PC-3 (cell line): ENCODE measurements at regions of chr9 and their contacts with region 1.

Region 1: DNA sequence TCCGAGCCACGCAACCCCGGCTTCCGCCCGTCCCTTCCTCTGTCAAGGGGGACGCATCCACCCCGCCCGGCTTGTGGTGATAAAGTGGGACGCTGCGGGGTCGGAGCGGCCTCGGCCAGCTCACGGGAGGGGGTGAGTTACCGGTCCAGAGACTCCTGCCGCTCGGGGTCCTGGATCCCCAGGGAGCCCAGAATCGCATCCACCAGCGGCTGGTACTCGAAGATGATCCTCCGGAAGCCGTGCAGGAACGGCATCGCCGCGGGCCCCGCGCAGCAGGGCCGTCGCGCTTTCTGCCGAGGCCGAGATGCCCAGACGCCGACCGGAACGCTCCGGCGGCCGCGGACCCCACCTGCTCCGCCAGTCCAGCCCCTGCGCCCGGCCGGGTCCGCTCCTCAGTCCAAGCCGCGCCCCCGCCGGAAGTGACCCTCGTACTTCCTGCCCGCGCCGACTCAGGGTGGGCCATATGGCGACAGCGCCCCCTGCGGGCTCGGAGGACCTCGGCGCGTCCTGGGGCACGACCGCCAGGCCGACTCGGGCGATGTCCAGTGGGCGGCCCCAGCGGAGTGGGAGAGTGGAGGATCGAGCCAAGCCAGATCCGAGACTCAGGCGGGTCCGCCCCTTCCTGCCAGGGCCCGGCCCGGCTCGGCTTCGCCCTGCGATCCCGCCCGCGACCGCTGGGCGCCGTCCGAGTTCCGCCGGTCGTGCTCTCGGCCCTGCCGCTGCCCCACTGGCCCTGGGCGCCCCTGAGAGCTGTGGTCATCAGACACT is at the start of gene ASB6:
- DNase-seq: peak; percentile 91
- ATAC-seq: peak; percentile 97
- H3K4me3 ChIP-seq: peak within 1 kb of the TSS; percentile 97
- H3K27ac ChIP-seq: no peak within 1 kb of the TSS
- H3K4me1 ChIP-seq: peaks cover 3% of the 10 kb centered on the region; the same call in 1 of the 2 replicates
- H3K27me3 ChIP-seq: no peaks in the 10 kb centered on the region
- CTCF ChIP-seq: peak; percentile 91
- total RNA-seq, gene ASB6: 19.1 and 20.8 TPM in 2 replicates

Region 2: GRCh38 chr9:129569502-129570449 is 72.2 kb before region 1 on chr9:
- CTCF ChIA-PET with region 1: no interaction called
- POLR2A ChIA-PET with region 1: no interaction called
- intact Hi-C with region 1: no loop called
- DNase-seq: peak; percentile 13
- ATAC-seq: no peak
- H3K4me3 ChIP-seq: no peak overlapping the region
- H3K27ac ChIP-seq: peak overlapping the region; percentile 74
- H3K4me1 ChIP-seq: peaks cover 22% of the 10 kb centered on the region
- H3K27me3 ChIP-seq: no peaks in the 10 kb centered on the region
- CTCF ChIP-seq: peak; percentile 40

Region 3: GRCh38 chr9:129687396-129687795 is 45.5 kb after region 1 on chr9:
- CTCF ChIA-PET with region 1: no interaction called
- POLR2A ChIA-PET with region 1: no interaction called
- intact Hi-C with region 1: loop called (anchors 1 kb)
- DNase-seq: peak; percentile 78
- ATAC-seq: peak; percentile 88
- H3K4me3 ChIP-seq: no peak overlapping the region
- H3K27ac ChIP-seq: no peak overlapping the region
- H3K4me1 ChIP-seq: peaks cover 27% of the 10 kb centered on the region
- H3K27me3 ChIP-seq: no peaks in the 10 kb centered on the region
- CTCF ChIP-seq: no peak

Region 4: DNA sequence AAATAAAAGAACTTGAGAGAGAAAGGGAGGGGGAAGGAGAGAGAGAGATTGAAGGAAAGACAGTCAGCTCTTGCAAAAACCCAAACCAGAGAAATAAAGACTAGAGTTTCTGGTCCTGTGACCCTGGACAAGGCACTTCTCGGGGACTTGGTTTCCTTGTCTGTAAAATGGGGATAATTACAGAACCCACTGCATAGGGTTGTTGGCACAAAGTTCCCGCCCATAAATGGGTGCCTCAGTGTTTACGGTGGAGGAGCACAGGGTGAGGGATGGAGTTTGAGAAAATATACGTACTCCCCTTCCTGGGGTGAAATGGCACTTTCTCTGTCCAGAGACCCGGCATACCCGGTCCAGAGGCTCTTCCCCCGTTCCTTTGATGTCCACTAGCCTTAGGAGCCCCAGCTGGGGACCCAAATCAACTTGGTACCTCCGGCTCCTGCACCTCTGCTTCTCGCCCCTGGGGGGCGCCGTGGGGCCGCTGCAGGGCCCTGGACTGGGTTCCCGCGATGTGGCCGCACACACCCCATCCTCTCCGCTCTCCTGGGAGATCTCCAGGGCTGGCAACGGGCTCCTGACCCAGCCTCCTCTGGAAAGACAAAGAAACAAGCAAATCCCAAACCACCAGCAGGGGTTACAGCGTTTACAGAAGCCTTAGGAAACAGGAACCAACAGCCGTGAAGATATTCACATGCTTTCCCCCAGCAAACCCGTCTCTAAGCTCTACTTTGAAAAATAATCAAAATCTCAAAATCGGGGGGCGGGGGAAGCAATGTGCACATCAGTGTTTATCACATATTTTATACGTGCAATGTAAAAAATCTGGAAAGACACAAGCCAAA is 84.6 kb after region 1 on chr9:
- CTCF ChIA-PET with region 1: no interaction called
- POLR2A ChIA-PET with region 1: no interaction called
- intact Hi-C with region 1: loop called (anchors 2 kb)
- DNase-seq: peak; percentile 77
- ATAC-seq: peak; percentile 98
- H3K4me3 ChIP-seq: peak overlapping the region; percentile 16; the same call in 1 of the 2 replicates
- H3K27ac ChIP-seq: no peak overlapping the region
- H3K4me1 ChIP-seq: no peaks in the 10 kb centered on the region
- H3K27me3 ChIP-seq: no peaks in the 10 kb centered on the region
- CTCF ChIP-seq: peak; percentile 87

Region 5: GRCh38 chr9:129761901-129762364 is 120.0 kb after region 1 on chr9:
- CTCF ChIA-PET with region 1: no interaction called
- POLR2A ChIA-PET with region 1: no interaction called
- intact Hi-C with region 1: no loop called
- DNase-seq: peak; percentile 35
- ATAC-seq: no peak
- H3K4me3 ChIP-seq: no peak overlapping the region
- H3K27ac ChIP-seq: peak overlapping the region; percentile 47
- H3K4me1 ChIP-seq: peaks cover 20% of the 10 kb centered on the region
- H3K27me3 ChIP-seq: no peaks in the 10 kb centered on the region
- CTCF ChIP-seq: no peak

Region 6: DNA sequence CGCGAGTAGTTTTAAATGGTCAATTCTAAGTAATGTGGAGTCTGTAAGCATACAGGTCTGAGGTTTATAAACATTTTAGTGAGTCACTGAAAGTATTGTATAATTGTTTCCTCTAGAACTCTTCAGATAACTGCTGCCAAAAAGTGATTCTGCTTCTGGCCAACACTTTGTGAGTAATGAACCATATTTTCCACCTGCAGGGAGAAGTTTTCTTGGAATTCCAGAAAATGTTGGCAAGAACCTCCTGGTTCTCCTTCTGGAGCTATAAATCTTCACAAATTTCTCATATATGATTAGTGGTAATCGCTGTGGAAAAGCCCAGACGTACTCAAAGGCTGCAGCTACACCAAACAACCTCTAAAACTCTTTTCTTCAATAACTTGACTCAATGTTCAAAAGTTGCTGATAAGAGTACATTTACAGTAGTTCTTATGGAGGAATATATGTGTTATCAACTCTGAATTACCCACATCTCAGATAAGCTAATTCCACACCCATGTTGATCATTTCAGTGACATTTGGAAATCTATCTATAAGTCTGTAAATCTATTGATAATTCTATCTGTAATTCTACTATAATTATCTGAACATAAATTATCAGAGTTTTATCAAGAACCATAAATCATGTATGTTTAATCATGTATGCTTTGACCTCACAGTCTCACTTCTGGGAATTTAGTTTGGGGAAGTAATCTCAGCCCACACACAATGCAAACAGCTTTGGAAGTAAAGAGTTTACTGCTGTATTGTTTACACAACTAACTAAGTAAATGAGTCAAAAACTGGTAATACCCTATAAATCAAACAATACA is 327.0 kb after region 1 on chr9:
- CTCF ChIA-PET with region 1: no interaction called
- POLR2A ChIA-PET with region 1: no interaction called
- intact Hi-C with region 1: no loop called
- DNase-seq: peak; percentile 89
- ATAC-seq: peak; percentile 70
- H3K4me3 ChIP-seq: no peak overlapping the region
- H3K27ac ChIP-seq: peak overlapping the region; percentile 95
- H3K4me1 ChIP-seq: peaks cover 36% of the 10 kb centered on the region
- H3K27me3 ChIP-seq: no peaks in the 10 kb centered on the region
- CTCF ChIP-seq: no peak